Heart left ventricle (tissue), 16 donors: ENCODE measurements at regions of chr9 and their contacts with region 1.

Region 1: GRCh38 chr9:132973713-132974112 is 4.8 kb upstream of the GFI1B start:
- DNase-seq: no peak
- ATAC-seq: no peak
- H3K4me3 ChIP-seq: no peak overlapping the region
- H3K27ac ChIP-seq: no peak overlapping the region
- H3K4me1 ChIP-seq: peaks cover 0 to 11% (median 0%) of the 10 kb centered on the region in 12 donors
- H3K27me3 ChIP-seq: peaks cover 0 to 39% (median 8%) of the 10 kb centered on the region in 9 donors
- CTCF ChIP-seq: no peak
- POLR2A ChIP-seq: no peak

Region 2: DNA sequence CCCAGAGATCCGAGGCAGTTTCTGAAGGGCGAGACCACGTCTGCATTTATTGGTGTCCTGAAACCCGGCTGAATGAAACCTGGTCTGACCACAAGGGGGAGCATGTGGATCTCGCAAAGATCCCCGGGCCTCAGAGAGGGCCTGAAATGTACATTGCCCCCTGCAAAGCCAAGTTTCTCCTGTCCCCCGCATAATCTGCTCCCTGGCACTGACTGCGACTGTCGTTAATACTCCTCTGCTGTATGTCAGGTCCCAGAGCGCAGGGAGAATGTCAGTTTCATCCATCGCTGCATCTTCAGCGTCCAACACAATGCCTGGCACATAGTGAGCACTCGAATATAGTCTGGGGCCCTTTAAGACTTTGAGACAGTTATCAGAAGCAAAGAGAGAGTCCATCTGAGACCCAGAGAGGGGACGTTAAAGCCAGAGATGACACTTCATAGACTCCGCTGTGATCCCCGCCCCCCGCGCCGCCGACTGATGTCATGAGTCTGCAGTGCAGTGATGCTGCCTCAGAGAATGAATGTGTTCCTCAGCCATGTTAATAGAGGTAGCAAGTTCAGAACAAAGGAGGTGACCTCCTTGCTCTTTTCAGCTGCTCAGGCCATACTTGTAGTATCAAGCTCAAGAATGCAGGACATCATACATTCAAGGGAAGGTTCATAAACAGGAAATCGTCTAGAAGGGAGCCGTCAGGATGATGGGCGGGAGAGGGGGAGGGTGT is 465.8 kb before region 1 on chr9:
- intact Hi-C with region 1: loop called in 1 of 10 experiments (anchors 10 kb)
- DNase-seq: peak in 4 of 5 donors; percentile 38 to 56 (median 53)
- ATAC-seq: peak; percentile 49 to 71 (median 60)
- H3K4me3 ChIP-seq: no peak overlapping the region
- H3K27ac ChIP-seq: no peak overlapping the region
- H3K4me1 ChIP-seq: peaks cover 0 to 4% (median 0%) of the 10 kb centered on the region in 12 donors
- H3K27me3 ChIP-seq: peaks cover 0 to 36% (median 3%) of the 10 kb centered on the region in 9 donors
- CTCF ChIP-seq: peak; percentile 62 to 81 (median 74)
- POLR2A ChIP-seq: no peak

Region 3: DNA sequence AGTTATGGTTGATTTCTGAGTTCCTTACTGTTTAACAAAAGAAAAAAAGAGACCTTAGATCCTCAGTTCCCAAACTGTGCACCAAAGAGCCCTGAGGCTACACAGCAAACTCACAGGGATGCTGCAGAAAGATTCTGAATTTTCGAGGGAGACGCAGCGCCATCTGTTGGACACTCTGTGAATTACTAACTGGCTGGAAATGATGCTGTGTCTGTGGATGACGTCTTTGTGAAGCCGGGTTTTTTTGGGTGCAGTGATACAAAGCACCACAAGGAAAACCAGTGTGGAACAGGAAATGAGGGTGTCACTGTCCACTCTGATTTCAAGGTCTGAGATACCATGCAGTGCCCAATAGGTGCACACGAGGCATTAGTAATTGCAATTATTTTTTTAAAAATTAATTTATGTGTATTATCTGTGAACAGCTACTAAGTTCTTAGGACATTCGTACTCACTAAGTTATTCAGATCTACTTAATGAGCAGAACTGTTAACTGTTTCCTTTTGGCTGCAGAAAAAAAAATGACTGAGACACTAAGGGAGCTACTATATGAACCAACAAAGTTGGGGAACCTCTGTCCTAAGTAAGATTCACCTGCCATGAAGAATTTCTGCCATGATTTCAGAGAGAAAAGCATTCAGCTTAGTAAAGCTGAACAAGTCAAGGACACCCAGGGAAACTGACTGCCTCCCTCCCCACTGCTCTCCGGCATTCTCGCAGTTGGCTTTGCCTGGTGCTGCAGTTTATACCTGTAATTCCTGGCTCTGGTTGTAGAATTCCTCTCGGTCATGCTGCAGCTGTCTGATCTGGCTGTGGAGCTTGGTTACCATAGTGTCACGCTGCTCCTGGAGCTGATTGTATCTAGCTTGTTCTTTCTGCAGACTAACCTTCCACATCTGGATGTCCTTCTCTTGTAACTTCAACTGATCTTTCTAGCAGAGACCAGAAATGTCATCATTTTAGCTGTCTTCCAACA is 71.6 kb before region 1 on chr9:
- intact Hi-C with region 1: loop called in 2 of 10 experiments (anchors 5 to 10 kb)
- DNase-seq: peak in 4 of 5 donors; percentile 44 to 52 (median 48)
- ATAC-seq: peak; percentile 22 to 70 (median 68)
- H3K4me3 ChIP-seq: no peak overlapping the region
- H3K27ac ChIP-seq: no peak overlapping the region
- H3K4me1 ChIP-seq: peaks cover 0 to 16% (median 1%) of the 10 kb centered on the region in 12 donors
- H3K27me3 ChIP-seq: no peaks in the 10 kb centered on the region
- CTCF ChIP-seq: peak; percentile 79 to 96 (median 88)
- POLR2A ChIP-seq: no peak

Region 4: DNA sequence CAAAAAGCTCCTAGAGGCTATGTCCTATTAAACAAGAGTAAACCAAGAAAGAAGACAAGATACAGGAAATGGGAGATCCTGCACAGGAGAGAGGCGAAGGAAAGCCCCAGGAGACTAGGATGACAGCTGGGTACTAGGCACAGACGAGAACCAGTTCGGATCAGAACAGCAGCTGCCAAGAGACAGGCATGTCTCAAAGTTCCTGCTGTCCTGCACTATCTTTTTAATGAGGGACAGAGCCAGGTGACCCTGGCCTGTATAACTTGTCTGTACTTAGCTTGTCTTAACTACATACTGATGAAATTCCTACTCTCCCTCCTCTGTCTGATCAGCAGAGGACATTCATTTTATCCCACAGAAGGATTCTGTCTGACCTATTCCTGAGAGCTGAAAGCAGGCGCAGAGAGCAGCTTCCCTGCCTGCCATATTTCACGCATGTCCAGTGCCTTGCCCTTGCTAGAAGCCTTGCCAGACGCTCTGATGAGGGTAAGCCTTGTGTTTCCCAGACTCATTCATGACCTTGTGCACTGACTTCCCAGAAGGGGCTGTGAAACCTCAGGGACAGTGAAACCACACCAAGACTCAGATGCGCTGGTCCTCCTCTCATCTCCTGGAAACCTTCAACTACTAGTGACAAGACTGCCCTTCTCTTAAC is 54.0 kb before region 1 on chr9:
- intact Hi-C with region 1: loop called in 1 of 10 experiments (anchors 10 kb)
- DNase-seq: peak in 1 of 5 donors; percentile 35
- ATAC-seq: peak; percentile 47 to 86 (median 74)
- H3K4me3 ChIP-seq: no peak overlapping the region
- H3K27ac ChIP-seq: peak overlapping the region in 7 of 12 donors; percentile 4 to 51 (median 32)
- H3K4me1 ChIP-seq: peaks cover 0 to 13% (median 0%) of the 10 kb centered on the region in 12 donors
- H3K27me3 ChIP-seq: no peaks in the 10 kb centered on the region
- CTCF ChIP-seq: no peak
- POLR2A ChIP-seq: no peak

Region 5: GRCh38 chr9:132937463-132937901 is 36.2 kb before region 1 on chr9:
- intact Hi-C with region 1: loop called in 1 of 10 experiments (anchors 5 kb)
- DNase-seq: no peak
- ATAC-seq: no peak
- H3K4me3 ChIP-seq: no peak overlapping the region
- H3K27ac ChIP-seq: no peak overlapping the region
- H3K4me1 ChIP-seq: peaks cover 0 to 42% (median 21%) of the 10 kb centered on the region in 12 donors
- H3K27me3 ChIP-seq: no peaks in the 10 kb centered on the region
- CTCF ChIP-seq: no peak
- POLR2A ChIP-seq: no peak

Region 6: GRCh38 chr9:133163504-133164172 is 189.9 kb after region 1 on chr9 and contains the start of gene GBGT1:
- intact Hi-C with region 1: no loop called
- DNase-seq: peak; percentile 79 to 92 (median 82)
- ATAC-seq: peak; percentile 29 to 73 (median 69)
- H3K4me3 ChIP-seq: peak within 1 kb of the TSS; percentile 56 to 87 (median 74)
- H3K27ac ChIP-seq: peak within 1 kb of the TSS; percentile 29 to 84 (median 76)
- H3K4me1 ChIP-seq: peaks cover 0 to 41% (median 16%) of the 10 kb centered on the region in 12 donors
- H3K27me3 ChIP-seq: no peaks in the 10 kb centered on the region
- CTCF ChIP-seq: no peak
- POLR2A ChIP-seq: no peak
- total RNA-seq, gene GBGT1: 4.6 to 22.5 (median 7.1) TPM

Region 7: GRCh38 chr9:133485361-133486260 is 511.9 kb after region 1 on chr9:
- intact Hi-C with region 1: no loop called
- DNase-seq: peak in 3 of 5 donors; percentile 21 to 69 (median 22)
- ATAC-seq: peak in 2 of 4 donors; percentile 4 to 11
- H3K4me3 ChIP-seq: no peak overlapping the region
- H3K27ac ChIP-seq: no peak overlapping the region
- H3K4me1 ChIP-seq: peaks cover 0 to 12% (median 2%) of the 10 kb centered on the region in 12 donors
- H3K27me3 ChIP-seq: peaks cover 0 to 4% (median 0%) of the 10 kb centered on the region in 9 donors
- CTCF ChIP-seq: no peak
- POLR2A ChIP-seq: no peak